Activated CD8-positive, alpha-beta T cell treated with anti-CD3 and anti-CD28 coated beads, Interleukin-2, amount 10 ng/mL, durations not matched to agents 7 days and 5 days (primary cell): ENCODE measurements at regions of chr10 and their contacts with region 1.

Region 1: DNA sequence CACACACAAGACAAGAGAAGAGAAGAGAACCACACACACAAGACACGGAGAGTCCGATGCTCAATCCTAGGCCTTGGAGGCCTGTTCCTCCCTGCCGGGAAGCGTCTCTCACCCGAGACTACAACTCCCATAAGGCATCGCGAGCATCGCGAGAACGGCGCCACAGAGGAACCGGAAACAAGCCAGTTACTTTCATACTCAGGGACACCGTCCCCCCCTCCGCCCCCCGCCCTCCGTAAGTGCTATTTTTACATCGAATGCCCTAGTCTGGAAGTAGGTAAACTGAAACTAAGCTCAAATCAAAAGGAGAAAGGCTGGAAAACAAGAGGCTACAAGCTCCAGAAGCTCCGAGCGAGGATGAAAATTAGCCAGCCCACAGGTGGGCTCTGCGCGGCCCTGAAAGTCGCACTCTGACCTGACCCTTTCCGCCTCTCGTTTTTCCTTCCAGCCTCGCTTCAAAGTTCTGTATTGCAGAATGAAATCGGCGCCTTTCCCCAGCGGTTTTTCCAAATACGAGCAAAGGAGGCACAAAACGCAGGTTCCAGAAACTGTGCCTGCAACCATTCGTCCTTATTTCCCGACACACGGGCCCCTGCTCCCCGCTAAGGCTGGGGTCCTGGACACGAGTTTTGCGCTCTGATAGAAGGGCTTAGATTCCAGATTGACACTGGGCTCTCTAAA is 11.5 kb upstream of the DNAJC12 start:
- DNase-seq: peak; percentile 96
- ATAC-seq: peak; percentile 100
- H3K4me3 Mint-ChIP-seq: peak overlapping the region; percentile 92
- H3K27ac Mint-ChIP-seq: peak overlapping the region; percentile 98
- H3K4me1 Mint-ChIP-seq: peaks cover 13% of the 10 kb centered on the region
- H3K27me3 Mint-ChIP-seq: no peaks in the 10 kb centered on the region

Region 2: GRCh38 chr10:67864607-67865371 is 15.3 kb after region 1 on chr10:
- CTCF ChIA-PET with region 1: interaction called, 11 read pairs
- POLR2A ChIA-PET with region 1: interaction called, 3 read pairs
- DNase-seq: no peak
- ATAC-seq: no peak
- H3K4me3 Mint-ChIP-seq: no peak overlapping the region
- H3K27ac Mint-ChIP-seq: no peak overlapping the region
- H3K4me1 Mint-ChIP-seq: no peaks in the 10 kb centered on the region
- H3K27me3 Mint-ChIP-seq: no peaks in the 10 kb centered on the region

Region 3: GRCh38 chr10:67884313-67884841 is 34.9 kb after region 1 on chr10 and contains the start of gene SIRT1:
- CTCF ChIA-PET with region 1: interaction called, 10 read pairs
- POLR2A ChIA-PET with region 1: interaction called, 4 read pairs
- DNase-seq: peak; percentile 94
- ATAC-seq: peak; percentile 85
- H3K4me3 Mint-ChIP-seq: peak within 1 kb of the TSS; percentile 93
- H3K27ac Mint-ChIP-seq: peak within 1 kb of the TSS; percentile 93
- H3K4me1 Mint-ChIP-seq: peaks cover 31% of the 10 kb centered on the region
- H3K27me3 Mint-ChIP-seq: no peaks in the 10 kb centered on the region
- total RNA-seq, gene SIRT1: 21.9 TPM

Region 4: GRCh38 chr10:68156373-68157185 is 307.1 kb after region 1 on chr10:
- CTCF ChIA-PET with region 1: interaction called, 132 read pairs
- POLR2A ChIA-PET with region 1: no interaction called
- DNase-seq: peak; percentile 75
- ATAC-seq: peak; percentile 81
- H3K4me3 Mint-ChIP-seq: no peak overlapping the region
- H3K27ac Mint-ChIP-seq: no peak overlapping the region
- H3K4me1 Mint-ChIP-seq: no peaks in the 10 kb centered on the region
- H3K27me3 Mint-ChIP-seq: peaks cover 2% of the 10 kb centered on the region

Region 5: DNA sequence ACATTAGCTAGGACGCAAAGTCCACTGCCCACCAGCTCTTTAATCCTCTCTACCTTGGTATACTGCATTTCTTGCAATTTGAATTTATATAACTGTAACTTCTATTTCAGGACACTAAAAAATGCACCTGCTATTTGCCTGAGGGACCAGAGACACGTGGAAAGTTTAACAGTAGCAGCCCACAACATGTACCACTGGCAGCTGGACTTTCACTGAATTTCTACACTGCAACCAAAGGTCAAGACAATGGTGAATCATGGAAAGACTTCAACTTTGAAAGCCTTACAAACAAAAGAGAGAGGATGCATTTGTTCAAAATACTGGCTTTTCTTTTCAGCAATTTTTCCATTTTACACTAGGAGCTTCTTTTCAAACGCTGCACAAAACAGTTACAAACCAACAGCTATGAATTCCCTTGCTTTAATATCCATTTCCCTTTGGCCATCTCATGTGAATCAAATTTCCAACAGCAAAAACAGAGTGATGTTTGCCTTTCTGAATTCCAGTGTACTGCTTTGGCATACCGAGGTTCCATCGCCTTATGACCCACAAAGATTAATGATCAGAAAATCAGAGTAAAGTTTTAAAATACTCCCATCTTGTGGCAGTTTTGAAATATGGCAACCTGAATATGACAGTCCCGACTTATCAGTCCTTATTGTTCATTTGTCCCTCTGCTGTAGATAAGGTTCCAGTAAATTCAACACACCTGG is 452.5 kb after region 1 on chr10:
- CTCF ChIA-PET with region 1: interaction called, 25 read pairs
- POLR2A ChIA-PET with region 1: no interaction called
- DNase-seq: no peak
- ATAC-seq: peak; percentile 49
- H3K4me3 Mint-ChIP-seq: no peak overlapping the region
- H3K27ac Mint-ChIP-seq: no peak overlapping the region
- H3K4me1 Mint-ChIP-seq: no peaks in the 10 kb centered on the region
- H3K27me3 Mint-ChIP-seq: no peaks in the 10 kb centered on the region

Region 6: DNA sequence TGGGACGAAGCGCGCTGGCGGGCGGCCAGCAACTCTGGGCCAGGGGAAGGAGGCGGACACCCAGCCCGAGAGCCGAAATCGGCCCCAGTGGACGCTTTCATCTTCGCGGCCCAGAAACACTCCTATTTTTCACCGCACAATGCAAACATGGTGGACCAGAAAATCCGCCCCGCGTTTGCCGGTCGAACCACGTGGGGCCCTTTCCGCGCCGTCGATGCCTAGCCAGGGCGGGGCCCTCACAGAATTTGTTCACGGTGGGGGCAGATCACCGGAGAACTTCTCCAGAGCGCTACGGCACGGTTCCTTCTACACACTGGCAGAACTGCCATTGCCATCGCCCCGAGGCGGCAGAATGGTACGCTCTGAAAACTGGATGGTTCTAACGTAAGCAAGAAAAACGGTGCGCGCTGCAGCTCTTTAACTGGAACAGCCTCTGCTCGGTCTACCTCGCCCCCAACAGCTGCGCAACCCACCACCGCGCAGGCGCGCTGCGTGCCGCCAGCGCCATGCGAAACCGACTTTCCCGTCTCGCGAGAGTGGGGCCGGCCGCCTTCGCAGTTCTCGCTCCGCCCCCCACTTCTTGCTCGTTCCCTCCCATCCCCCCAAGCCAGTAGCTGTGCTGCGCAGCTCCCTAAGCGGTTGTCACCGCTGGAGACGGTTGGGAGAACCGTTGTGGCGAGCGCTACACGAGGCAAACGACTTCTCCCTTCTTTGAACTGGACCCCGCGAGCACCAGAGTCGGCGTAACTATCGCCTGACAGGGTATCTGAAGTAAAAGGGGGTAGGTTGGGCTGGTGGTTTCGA is 482.2 kb after region 1 on chr10 and contains the start of gene HNRNPH3:
- CTCF ChIA-PET with region 1: interaction called, 3 read pairs
- POLR2A ChIA-PET with region 1: interaction called, 12 read pairs
- DNase-seq: peak; percentile 99
- ATAC-seq: peak; percentile 88
- H3K4me3 Mint-ChIP-seq: peak within 1 kb of the TSS; percentile 98
- H3K27ac Mint-ChIP-seq: peak within 1 kb of the TSS; percentile 100
- H3K4me1 Mint-ChIP-seq: peaks cover 44% of the 10 kb centered on the region
- H3K27me3 Mint-ChIP-seq: no peaks in the 10 kb centered on the region
- total RNA-seq, gene HNRNPH3: 114 to 122 TPM